H1 (cell line): ENCODE measurements at regions of chr1 and their contacts with region 1.

Region 1: DNA sequence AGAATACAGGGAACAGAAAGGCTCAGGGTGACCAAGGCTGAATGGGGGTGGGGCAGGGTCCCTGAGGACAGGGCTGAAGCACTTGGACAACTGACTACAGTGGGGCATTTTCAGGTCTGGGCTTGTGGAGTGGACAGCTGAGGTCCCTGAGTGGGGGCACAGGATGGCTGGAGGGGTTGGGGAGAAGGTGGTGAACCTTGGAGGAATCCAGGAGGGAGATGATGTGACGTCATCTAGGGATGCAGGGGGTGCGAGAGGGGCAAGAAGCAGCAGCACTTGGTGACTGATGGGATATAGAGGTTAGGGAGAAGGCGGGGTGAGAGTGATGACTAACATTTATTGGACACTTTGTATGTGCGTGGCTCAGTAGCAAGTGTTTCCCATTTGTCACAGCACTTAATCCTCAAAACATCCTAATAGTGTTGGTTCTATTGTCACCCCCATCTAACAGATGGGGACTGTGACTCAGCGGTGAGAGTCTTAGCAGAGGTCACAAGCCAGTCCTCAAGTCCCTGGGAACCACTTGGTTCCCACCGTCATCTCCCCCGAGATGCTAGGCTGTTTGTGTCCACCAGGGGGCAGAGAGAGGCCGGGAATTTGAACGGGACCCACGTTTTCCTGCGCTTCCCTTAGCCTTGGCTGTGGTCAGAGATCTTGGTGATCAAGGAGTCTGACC is 27.9 kb upstream of the BMP8B start:
- DNase-seq: peak; percentile 43 to 92
- H3K4me3 ChIP-seq: no peak overlapping the region
- H3K27ac ChIP-seq: no peak overlapping the region
- H3K4me1 ChIP-seq: no peaks in the 10 kb centered on the region
- H3K27me3 ChIP-seq: no peaks in the 10 kb centered on the region; a peak in 1 of 7 replicates
- CTCF ChIP-seq: peak; percentile 81 to 85 (median 82)
- EP300 ChIP-seq: no peak
- POLR2A ChIP-seq: no peak
- RAD21 ChIP-seq: peak; percentile 86 to 89

Region 2: DNA sequence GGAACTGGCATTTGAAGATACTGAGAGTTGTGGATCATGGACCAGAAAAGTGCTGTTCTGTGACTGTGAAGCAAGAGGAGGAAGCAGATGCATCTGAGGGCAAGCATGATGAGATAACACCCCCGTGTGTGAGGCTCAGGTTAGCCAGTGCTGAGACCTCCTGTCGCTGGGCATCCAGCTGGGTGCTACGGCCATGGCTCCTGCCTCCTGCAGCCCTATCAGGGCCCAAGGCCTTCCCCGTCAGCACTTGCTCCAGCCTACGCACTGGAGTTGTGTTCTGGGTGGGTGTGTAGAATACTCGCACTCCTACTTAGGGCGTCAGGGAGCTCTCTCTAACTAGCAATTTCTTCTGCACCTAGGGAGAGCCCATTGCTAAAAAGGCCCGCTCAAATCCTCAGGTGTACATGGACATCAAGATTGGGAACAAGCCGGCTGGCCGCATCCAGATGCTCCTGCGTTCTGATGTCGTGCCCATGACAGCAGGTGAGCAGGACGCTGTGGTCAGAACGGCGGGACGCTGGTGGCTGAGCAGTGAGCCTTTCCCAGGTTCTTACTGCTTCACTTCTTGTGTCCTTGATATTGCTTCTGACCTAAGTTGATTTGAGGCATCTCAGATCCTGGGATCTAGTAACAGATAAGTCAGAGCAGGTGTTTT is 71.4 kb before region 1 on chr1:
- CTCF ChIA-PET with region 1: no interaction called
- POLR2A ChIA-PET with region 1: no interaction called
- DNase-seq: no peak
- H3K4me3 ChIP-seq: no peak overlapping the region
- H3K27ac ChIP-seq: no peak overlapping the region
- H3K4me1 ChIP-seq: no peaks in the 10 kb centered on the region
- H3K27me3 ChIP-seq: no peaks in the 10 kb centered on the region
- CTCF ChIP-seq: no peak
- EP300 ChIP-seq: no peak
- POLR2A ChIP-seq: no peak
- RAD21 ChIP-seq: no peak

Region 3: DNA sequence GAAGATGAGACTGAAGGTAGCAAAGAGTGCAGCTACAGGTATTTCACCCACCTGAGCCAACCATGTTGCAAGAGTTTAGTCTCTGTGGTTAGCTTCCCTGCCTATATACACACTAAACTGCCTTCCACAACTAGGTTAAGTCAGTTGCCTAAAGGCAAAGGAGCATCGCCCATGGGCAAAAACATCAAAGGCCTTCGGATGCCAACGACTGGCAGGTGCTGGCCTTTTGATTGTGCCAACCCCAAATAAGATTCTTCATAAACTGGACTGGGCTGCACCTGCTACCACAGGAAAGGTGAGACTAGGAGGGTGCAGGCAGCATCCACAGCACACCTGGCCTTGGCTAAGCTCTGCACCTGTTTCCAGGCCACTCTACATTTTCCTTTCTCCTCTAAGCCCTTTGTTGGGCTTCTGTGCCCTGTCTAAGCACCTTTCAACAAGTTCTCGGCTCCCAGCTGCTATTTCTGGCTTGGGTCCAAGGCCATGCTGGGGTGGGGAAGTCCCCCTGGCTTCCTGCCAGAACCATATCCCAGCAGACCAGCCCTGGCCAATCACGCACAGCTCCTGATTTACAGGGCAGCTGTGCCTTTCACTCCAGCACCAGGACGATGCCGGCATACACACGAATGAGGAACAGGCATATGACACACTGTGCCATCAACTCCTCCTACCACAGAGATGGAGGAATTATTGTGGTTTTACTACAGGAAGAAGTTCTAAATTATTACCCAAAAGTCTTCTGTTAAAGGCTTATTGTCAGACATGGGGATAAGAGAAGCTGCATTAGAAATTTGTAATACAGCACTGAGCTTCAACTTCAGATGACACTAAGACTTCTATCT is 28.9 kb after region 1 on chr1:
- CTCF ChIA-PET with region 1: interaction called, 10 read pairs
- POLR2A ChIA-PET with region 1: interaction called, 3 read pairs
- DNase-seq: no peak
- H3K4me3 ChIP-seq: no peak overlapping the region
- H3K27ac ChIP-seq: no peak overlapping the region
- H3K4me1 ChIP-seq: no peaks in the 10 kb centered on the region
- H3K27me3 ChIP-seq: no peaks in the 10 kb centered on the region
- CTCF ChIP-seq: no peak
- EP300 ChIP-seq: no peak
- POLR2A ChIP-seq: no peak
- RAD21 ChIP-seq: no peak

Region 4: DNA sequence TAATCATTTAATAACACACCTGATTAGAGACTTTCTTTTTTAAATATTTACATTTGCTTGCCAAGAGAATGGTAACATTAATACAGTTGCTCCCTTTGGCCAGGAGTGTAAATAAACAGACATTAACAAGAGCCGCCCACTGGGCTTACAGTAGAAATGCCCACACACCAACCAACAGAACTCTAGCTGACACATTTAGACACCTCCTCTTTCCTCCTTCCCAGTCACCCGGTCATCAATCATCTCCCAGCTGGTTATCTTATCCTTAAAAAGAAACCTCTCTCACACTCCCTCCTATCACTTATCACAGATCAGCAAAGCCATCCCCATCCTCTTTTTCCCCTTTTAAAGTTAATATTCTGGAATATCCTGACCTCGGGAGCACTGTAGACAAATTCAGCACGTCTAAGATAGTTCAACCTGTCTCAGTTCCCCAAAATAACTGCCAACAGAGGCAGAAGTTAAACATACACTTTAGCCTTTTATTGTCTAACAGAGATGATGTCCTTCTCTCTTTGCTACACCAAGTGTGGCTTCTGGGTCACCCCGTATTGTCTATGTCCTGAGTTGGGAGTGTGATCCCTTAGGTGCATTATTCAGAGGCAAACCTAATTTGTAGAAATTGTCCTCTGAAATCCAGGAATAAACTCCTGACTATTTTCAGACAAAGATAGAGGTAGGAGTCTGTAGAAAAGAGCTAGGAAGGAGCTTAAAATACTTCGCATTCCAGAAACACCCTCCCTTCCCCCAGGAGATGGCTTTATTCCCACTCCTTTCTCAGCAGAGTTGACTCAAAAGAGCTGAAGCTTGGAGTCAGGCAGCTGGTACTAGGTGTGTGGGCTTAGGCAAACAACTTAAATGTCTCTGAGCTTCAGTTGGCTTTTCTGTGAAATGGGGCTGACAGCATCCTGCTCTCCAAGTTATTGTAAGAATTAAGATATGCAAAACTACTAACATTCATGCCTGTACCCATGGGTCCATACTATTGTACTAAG is 76.3 kb after region 1 on chr1:
- CTCF ChIA-PET with region 1: interaction called, 78 read pairs
- POLR2A ChIA-PET with region 1: no interaction called
- DNase-seq: no peak
- H3K4me3 ChIP-seq: peak overlapping the region; percentile 2 to 41 (median 6); a peak in 5 of 8 replicates
- H3K27ac ChIP-seq: peak overlapping the region; percentile 77
- H3K4me1 ChIP-seq: peaks cover 19 to 44% (median 28%) of the 10 kb centered on the region in 4 experiments
- H3K27me3 ChIP-seq: no peaks in the 10 kb centered on the region
- CTCF ChIP-seq: no peak
- EP300 ChIP-seq: 0 out of 3 replicates have a peak, but pooled peaks of 1 of the 2 experiments have one; percentile 27
- POLR2A ChIP-seq: peak; percentile 30 to 41; a peak in 2 of 3 replicates
- RAD21 ChIP-seq: peak; percentile 8 to 17; a peak in 2 of 4 replicates

Region 5: GRCh38 chr1:39995973-39996393 is 179.4 kb after region 1 on chr1:
- CTCF ChIA-PET with region 1: no interaction called
- POLR2A ChIA-PET with region 1: no interaction called
- DNase-seq: no peak
- H3K4me3 ChIP-seq: no peak overlapping the region
- H3K27ac ChIP-seq: no peak overlapping the region
- H3K4me1 ChIP-seq: 0 out of 7 replicates have a peak, but pooled peaks cover 0 to 2% (median 1%) of the 10 kb centered on the region in 4 experiments
- H3K27me3 ChIP-seq: no peaks in the 10 kb centered on the region
- CTCF ChIP-seq: no peak
- EP300 ChIP-seq: no peak
- POLR2A ChIP-seq: no peak
- RAD21 ChIP-seq: no peak

Region 6: GRCh38 chr1:40032240-40032891 is 215.8 kb after region 1 on chr1:
- CTCF ChIA-PET with region 1: interaction called, 19 read pairs
- POLR2A ChIA-PET with region 1: interaction called, 3 read pairs
- DNase-seq: no peak
- H3K4me3 ChIP-seq: no peak overlapping the region
- H3K27ac ChIP-seq: no peak overlapping the region
- H3K4me1 ChIP-seq: no peaks in the 10 kb centered on the region
- H3K27me3 ChIP-seq: no peaks in the 10 kb centered on the region
- CTCF ChIP-seq: peak in 2 of 3 experiments; percentile 67 to 73; a peak in 3 of 4 replicates
- EP300 ChIP-seq: no peak
- POLR2A ChIP-seq: no peak
- RAD21 ChIP-seq: peak; percentile 71 to 76